CD4-positive, alpha-beta memory T cell (primary cell): ENCODE measurements at regions of chrX and their contacts with region 1.

Region 1: GRCh38 chrX:71181910-71182799 is 37.5 kb downstream of the NLGN3 start:
- DNase-seq: peak; percentile 81 to 91 (median 84)
- H3K4me3 ChIP-seq: peak overlapping the region; percentile 67 to 81
- H3K4me3 Mint-ChIP-seq: peak overlapping the region; percentile 91 to 98 (median 94)
- H3K27ac ChIP-seq: peak overlapping the region; percentile 85
- H3K27ac Mint-ChIP-seq: peak overlapping the region; percentile 94 to 99 (median 98)
- H3K4me1 ChIP-seq: peaks cover 8% of the 10 kb centered on the region
- H3K4me1 Mint-ChIP-seq: peaks cover 5 to 27% (median 19%) of the 10 kb centered on the region in 4 donors
- H3K27me3 ChIP-seq: no peaks in the 10 kb centered on the region
- H3K27me3 Mint-ChIP-seq: no peaks in the 10 kb centered on the region

Region 2: GRCh38 chrX:70970482-70970995 is 211.6 kb before region 1 on chrX:
- CTCF ChIA-PET with region 1: interaction called, 31 read pairs
- POLR2A ChIA-PET with region 1: no interaction called
- intact Hi-C with region 1: loop called (anchors 1 kb)
- DNase-seq: peak in 4 of 5 donors; percentile 5 to 29 (median 11)
- H3K4me3 ChIP-seq: no peak overlapping the region
- H3K4me3 Mint-ChIP-seq: peak overlapping the region in 2 of 8 donors; percentile 4 to 49
- H3K27ac ChIP-seq: no peak overlapping the region
- H3K27ac Mint-ChIP-seq: no peak overlapping the region
- H3K4me1 ChIP-seq: no peaks in the 10 kb centered on the region
- H3K4me1 Mint-ChIP-seq: peaks cover 0 to 8% (median 1%) of the 10 kb centered on the region in 4 donors
- H3K27me3 ChIP-seq: no peaks in the 10 kb centered on the region
- H3K27me3 Mint-ChIP-seq: no peaks in the 10 kb centered on the region

Region 3: DNA sequence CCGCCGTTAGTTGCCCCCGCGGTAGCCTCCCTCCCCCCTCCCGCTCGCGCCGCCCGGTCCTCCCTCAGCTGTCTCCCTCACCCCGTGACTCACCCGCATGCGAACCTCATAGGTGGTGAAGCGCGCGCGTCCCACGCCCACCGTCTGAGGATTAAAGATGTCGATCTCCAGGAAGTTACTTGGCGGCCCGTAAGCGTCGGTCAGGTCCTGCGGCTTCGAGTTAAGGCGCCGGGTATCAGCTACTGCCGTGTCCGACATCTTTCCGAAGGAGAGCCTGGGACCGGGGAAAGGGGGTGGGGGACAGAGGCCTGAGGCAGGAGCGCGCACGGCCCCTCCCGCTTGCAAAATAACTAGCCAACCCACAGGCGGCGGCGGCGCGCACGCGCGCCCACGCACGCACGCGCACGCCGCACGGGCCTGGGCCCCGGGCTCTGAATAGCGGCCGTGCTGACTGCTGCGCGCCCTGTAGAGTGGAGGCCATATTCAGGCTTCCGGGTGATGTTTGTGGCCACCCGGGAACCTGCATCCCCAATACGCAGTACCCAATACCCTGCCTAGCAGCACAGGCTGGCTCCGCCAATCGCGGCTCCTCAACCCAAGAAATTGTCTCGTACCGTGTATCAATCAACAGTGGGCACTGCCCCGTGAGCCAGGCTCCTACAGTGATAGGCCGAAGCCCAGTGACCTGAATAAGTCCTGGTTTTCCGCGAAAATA is 113.9 kb before region 1 on chrX and contains the start of gene SNX12:
- CTCF ChIA-PET with region 1: no interaction called
- POLR2A ChIA-PET with region 1: interaction called, 4 read pairs
- intact Hi-C with region 1: loop called (anchors 1 kb)
- DNase-seq: peak; percentile 88 to 93 (median 91)
- H3K4me3 ChIP-seq: peak within 1 kb of the TSS; percentile 53 to 69
- H3K4me3 Mint-ChIP-seq: peak within 1 kb of the TSS; percentile 88 to 97 (median 93)
- H3K27ac ChIP-seq: peak within 1 kb of the TSS; percentile 84
- H3K27ac Mint-ChIP-seq: peak within 1 kb of the TSS; percentile 93 to 98 (median 97)
- H3K4me1 ChIP-seq: peaks cover 16% of the 10 kb centered on the region
- H3K4me1 Mint-ChIP-seq: peaks cover 2 to 33% (median 14%) of the 10 kb centered on the region in 4 donors
- H3K27me3 ChIP-seq: no peaks in the 10 kb centered on the region
- H3K27me3 Mint-ChIP-seq: no peaks in the 10 kb centered on the region
- total RNA-seq, gene SNX12: 36.7 to 36.9 TPM

Region 4: GRCh38 chrX:71103110-71103983 is 78.8 kb before region 1 on chrX:
- CTCF ChIA-PET with region 1: interaction called, 11 read pairs
- POLR2A ChIA-PET with region 1: interaction called, 12 read pairs
- intact Hi-C with region 1: loop called (anchors 1 kb)
- DNase-seq: peak; percentile 58 to 71 (median 62)
- H3K4me3 ChIP-seq: peak overlapping the region; percentile 11 to 37
- H3K4me3 Mint-ChIP-seq: peak overlapping the region; percentile 79 to 90 (median 84)
- H3K27ac ChIP-seq: peak overlapping the region; percentile 66
- H3K27ac Mint-ChIP-seq: peak overlapping the region; percentile 91 to 97 (median 95)
- H3K4me1 ChIP-seq: peaks cover 90% of the 10 kb centered on the region
- H3K4me1 Mint-ChIP-seq: peaks cover 57 to 92% (median 82%) of the 10 kb centered on the region in 4 donors
- H3K27me3 ChIP-seq: no peaks in the 10 kb centered on the region
- H3K27me3 Mint-ChIP-seq: no peaks in the 10 kb centered on the region

Region 5: DNA sequence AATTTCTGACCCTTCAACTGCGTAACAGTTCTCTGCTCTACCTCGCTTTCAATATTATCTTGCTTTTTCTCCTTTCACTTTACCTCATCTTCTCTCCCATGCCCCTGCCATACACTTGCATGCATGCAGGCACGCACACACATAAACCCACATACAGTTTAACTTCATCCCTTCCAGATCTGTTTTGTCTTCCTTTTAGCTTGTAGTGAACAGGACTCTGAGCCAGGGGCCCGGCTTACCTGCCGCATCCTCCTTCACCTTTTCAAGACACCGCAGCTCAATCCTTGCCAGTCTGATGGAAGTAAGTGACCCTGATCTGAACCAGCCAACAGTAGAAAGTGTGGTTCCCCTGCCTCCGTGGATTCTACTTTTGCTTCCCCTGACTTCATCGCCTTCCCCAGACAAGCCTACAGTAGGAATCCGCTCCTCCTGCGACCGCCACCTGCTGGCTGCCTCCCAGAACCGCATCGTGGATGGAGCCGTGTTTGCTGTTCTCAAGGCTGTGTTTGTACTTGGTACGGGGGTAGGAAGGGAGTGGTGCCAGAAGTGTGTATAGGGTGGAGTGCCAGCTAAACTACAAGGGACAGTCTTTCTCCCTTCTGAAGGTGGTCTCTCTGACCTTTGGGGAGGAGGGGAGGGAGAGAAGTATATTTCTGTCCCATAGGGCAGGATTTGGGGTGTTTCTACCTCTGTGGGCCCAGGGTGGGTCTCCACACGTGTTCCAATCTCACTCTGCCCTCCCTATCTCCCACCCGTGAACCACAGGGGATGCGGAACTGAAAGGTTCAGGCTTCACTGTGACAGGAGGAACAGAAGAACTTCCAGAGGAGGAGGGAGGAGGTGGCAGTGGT is 53.0 kb before region 1 on chrX:
- CTCF ChIA-PET with region 1: interaction called, 6 read pairs
- POLR2A ChIA-PET with region 1: no interaction called
- intact Hi-C with region 1: loop called (anchors 2 kb)
- DNase-seq: peak; percentile 76 to 80 (median 80)
- H3K4me3 ChIP-seq: no peak overlapping the region
- H3K4me3 Mint-ChIP-seq: peak overlapping the region in 4 of 8 donors; percentile 0 to 64 (median 21)
- H3K27ac ChIP-seq: peak overlapping the region; percentile 28
- H3K27ac Mint-ChIP-seq: peak overlapping the region; percentile 38 to 94 (median 89)
- H3K4me1 ChIP-seq: peaks cover 13% of the 10 kb centered on the region
- H3K4me1 Mint-ChIP-seq: peaks cover 7 to 18% (median 15%) of the 10 kb centered on the region in 4 donors
- H3K27me3 ChIP-seq: no peaks in the 10 kb centered on the region
- H3K27me3 Mint-ChIP-seq: no peaks in the 10 kb centered on the region

Region 6: DNA sequence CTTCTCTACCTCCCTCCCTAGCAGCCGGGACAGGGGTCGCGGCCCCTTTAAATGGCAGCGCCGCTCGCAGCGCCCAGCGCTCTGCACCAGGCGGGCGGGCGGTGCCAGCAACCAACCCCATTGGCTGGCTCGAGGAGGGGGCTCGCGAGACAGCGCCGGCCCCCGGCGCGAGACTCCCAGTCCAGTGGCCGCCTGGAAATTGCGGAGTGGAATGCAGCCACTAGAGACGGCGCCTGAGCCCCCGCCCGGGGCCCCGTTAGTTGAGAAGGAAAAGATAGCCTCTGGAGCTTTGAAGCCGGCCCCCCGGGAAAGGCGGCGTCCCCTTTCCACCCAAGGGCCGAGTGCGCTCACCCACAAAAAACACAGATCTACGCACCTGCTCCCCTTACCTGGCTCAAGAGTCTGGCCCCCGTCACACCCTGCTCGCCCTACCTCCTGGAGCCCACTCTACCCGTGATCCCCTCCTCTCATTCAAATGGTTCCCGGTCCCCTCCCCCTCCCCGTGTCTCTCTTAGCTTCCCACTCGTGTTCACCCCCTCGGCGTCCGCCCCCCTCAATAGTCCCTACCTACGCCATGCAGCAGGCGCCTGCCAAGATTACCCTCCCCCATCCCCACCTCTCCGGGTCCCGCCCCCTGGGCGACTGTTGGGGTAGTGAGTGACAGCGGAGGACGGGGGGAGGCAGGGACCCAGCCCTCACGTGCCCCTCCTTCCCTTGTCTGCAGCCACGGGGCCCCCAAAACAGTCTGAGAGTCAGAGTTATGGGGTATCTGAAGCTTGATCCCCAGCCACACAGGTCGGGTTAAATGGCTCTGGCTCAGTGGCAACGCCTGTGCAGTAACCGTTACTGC is 72.2 kb after region 1 on chrX and contains the start of gene ZMYM3:
- CTCF ChIA-PET with region 1: interaction called, 5 read pairs
- POLR2A ChIA-PET with region 1: interaction called, 38 read pairs
- intact Hi-C with region 1: loop called (anchors 1 kb)
- DNase-seq: peak; percentile 75 to 86 (median 77)
- H3K4me3 ChIP-seq: peak within 1 kb of the TSS; percentile 52 to 81
- H3K4me3 Mint-ChIP-seq: peak within 1 kb of the TSS; percentile 90 to 98 (median 92)
- H3K27ac ChIP-seq: peak within 1 kb of the TSS; percentile 77
- H3K27ac Mint-ChIP-seq: peak within 1 kb of the TSS; percentile 93 to 97 (median 95)
- H3K4me1 ChIP-seq: peaks cover 25% of the 10 kb centered on the region
- H3K4me1 Mint-ChIP-seq: peaks cover 5 to 32% (median 13%) of the 10 kb centered on the region in 4 donors
- H3K27me3 ChIP-seq: no peaks in the 10 kb centered on the region
- H3K27me3 Mint-ChIP-seq: no peaks in the 10 kb centered on the region
- total RNA-seq, gene ZMYM3: 28.0 to 28.2 TPM

Region 7: GRCh38 chrX:71365876-71366673 is 183.9 kb after region 1 on chrX and contains the start of gene TAF1:
- CTCF ChIA-PET with region 1: no interaction called
- POLR2A ChIA-PET with region 1: interaction called, 30 read pairs
- intact Hi-C with region 1: loop called (anchors 1 kb)
- DNase-seq: peak; percentile 85 to 96 (median 93)
- H3K4me3 ChIP-seq: peak within 1 kb of the TSS; percentile 52 to 82
- H3K4me3 Mint-ChIP-seq: peak within 1 kb of the TSS; percentile 86 to 100 (median 96)
- H3K27ac ChIP-seq: peak within 1 kb of the TSS; percentile 86
- H3K27ac Mint-ChIP-seq: peak within 1 kb of the TSS; percentile 97 to 99 (median 98)
- H3K4me1 ChIP-seq: peaks cover 31% of the 10 kb centered on the region
- H3K4me1 Mint-ChIP-seq: peaks cover 14 to 35% (median 24%) of the 10 kb centered on the region in 4 donors
- H3K27me3 ChIP-seq: no peaks in the 10 kb centered on the region
- H3K27me3 Mint-ChIP-seq: no peaks in the 10 kb centered on the region
- total RNA-seq, gene TAF1: 73.6 to 81.8 TPM